Heart left ventricle (tissue), 16 donors: ENCODE measurements at regions of chr6 and their contacts with region 1.

Region 1: GRCh38 chr6:41463062-41463930 is 82.9 kb upstream of the FOXP4 start:
- DNase-seq: peak; percentile 66 to 85 (median 73)
- ATAC-seq: peak; percentile 83 to 95 (median 89)
- H3K4me3 ChIP-seq: no peak overlapping the region
- H3K27ac ChIP-seq: no peak overlapping the region
- H3K4me1 ChIP-seq: peaks cover 0 to 5% (median 0%) of the 10 kb centered on the region in 12 donors
- H3K27me3 ChIP-seq: peaks cover 0 to 14% (median 3%) of the 10 kb centered on the region in 9 donors
- CTCF ChIP-seq: peak; percentile 54 to 78 (median 69)
- POLR2A ChIP-seq: no peak

Region 2: DNA sequence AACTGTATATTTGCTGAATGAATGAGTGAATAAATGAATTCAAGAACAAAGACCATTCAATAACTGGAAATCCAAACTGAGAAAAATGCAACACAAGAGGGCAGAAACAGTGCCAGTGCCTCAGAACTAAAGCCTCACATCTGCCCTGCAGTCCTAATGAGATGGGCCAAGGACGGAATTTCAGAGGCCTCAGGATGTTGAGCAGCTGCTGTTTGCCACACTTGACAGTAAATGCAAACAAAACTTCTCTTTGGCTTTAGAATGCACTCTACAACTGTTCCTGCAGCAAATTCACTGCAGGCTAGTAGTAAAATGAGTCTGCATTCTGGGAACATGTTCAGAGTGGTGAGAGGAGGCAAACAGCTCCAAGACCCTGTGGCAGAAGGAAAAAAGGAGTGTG is 698.6 kb before region 1 on chr6:
- intact Hi-C with region 1: no loop called
- DNase-seq: no peak
- ATAC-seq: no peak
- H3K4me3 ChIP-seq: no peak overlapping the region
- H3K27ac ChIP-seq: no peak overlapping the region
- H3K4me1 ChIP-seq: peaks cover 0 to 10% (median 0%) of the 10 kb centered on the region in 12 donors
- H3K27me3 ChIP-seq: no peaks in the 10 kb centered on the region
- CTCF ChIP-seq: no peak
- POLR2A ChIP-seq: no peak

Region 3: GRCh38 chr6:41367700-41368099 is 95.6 kb before region 1 on chr6:
- intact Hi-C with region 1: loop called in 6 of 10 experiments (anchors 1 to 10 kb)
- DNase-seq: peak in 4 of 5 donors; percentile 45 to 50 (median 48)
- ATAC-seq: peak; percentile 40 to 78 (median 76)
- H3K4me3 ChIP-seq: no peak overlapping the region
- H3K27ac ChIP-seq: no peak overlapping the region
- H3K4me1 ChIP-seq: peaks cover 0 to 23% (median 14%) of the 10 kb centered on the region in 12 donors
- H3K27me3 ChIP-seq: peaks cover 6 to 64% (median 29%) of the 10 kb centered on the region in 9 donors
- CTCF ChIP-seq: peak; percentile 23 to 74 (median 60)
- POLR2A ChIP-seq: no peak

Region 4: GRCh38 chr6:41545703-41546474 is 82.6 kb after region 1 on chr6 and contains the start of gene FOXP4:
- intact Hi-C with region 1: loop called in 1 of 10 experiments (anchors 5 kb)
- DNase-seq: peak; percentile 90 to 93 (median 93)
- ATAC-seq: peak; percentile 88 to 94 (median 93)
- H3K4me3 ChIP-seq: peak within 1 kb of the TSS; percentile 51 to 97 (median 80)
- H3K27ac ChIP-seq: peak within 1 kb of the TSS; percentile 25 to 89 (median 79)
- H3K4me1 ChIP-seq: peaks cover 4 to 48% (median 20%) of the 10 kb centered on the region in 12 donors
- H3K27me3 ChIP-seq: peaks cover 0 to 20% (median 0%) of the 10 kb centered on the region in 9 donors
- CTCF ChIP-seq: no peak
- POLR2A ChIP-seq: no peak
- total RNA-seq, gene FOXP4: 11.3 to 22.5 (median 16.0) TPM

Region 5: GRCh38 chr6:41581381-41581991 is 118.2 kb after region 1 on chr6:
- intact Hi-C with region 1: loop called in 1 of 10 experiments (anchors 2 kb)
- DNase-seq: peak in 4 of 5 donors; percentile 35 to 80 (median 76)
- ATAC-seq: peak; percentile 6 to 78 (median 61)
- H3K4me3 ChIP-seq: no peak overlapping the region
- H3K27ac ChIP-seq: peak overlapping the region in 4 of 12 donors; percentile 17 to 47 (median 32)
- H3K4me1 ChIP-seq: peaks cover 0 to 67% (median 19%) of the 10 kb centered on the region in 12 donors
- H3K27me3 ChIP-seq: no peaks in the 10 kb centered on the region
- CTCF ChIP-seq: no peak
- POLR2A ChIP-seq: no peak

Region 6: GRCh38 chr6:41591859-41592502 is 128.7 kb after region 1 on chr6:
- intact Hi-C with region 1: loop called (anchors 1 to 5 kb)
- DNase-seq: peak in 4 of 5 donors; percentile 58 to 71 (median 64)
- ATAC-seq: peak; percentile 54 to 71 (median 60)
- H3K4me3 ChIP-seq: no peak overlapping the region
- H3K27ac ChIP-seq: no peak overlapping the region
- H3K4me1 ChIP-seq: no peaks in the 10 kb centered on the region
- H3K27me3 ChIP-seq: no peaks in the 10 kb centered on the region
- CTCF ChIP-seq: peak; percentile 80 to 96 (median 91)
- POLR2A ChIP-seq: peak in 1 of 2 donors; percentile 14

Region 7: GRCh38 chr6:41675176-41675770 is 212.0 kb after region 1 on chr6:
- intact Hi-C with region 1: loop called in 8 of 10 experiments (anchors 5 to 10 kb)
- DNase-seq: no peak
- ATAC-seq: no peak
- H3K4me3 ChIP-seq: no peak overlapping the region
- H3K27ac ChIP-seq: no peak overlapping the region
- H3K4me1 ChIP-seq: no peaks in the 10 kb centered on the region
- H3K27me3 ChIP-seq: no peaks in the 10 kb centered on the region
- CTCF ChIP-seq: no peak
- POLR2A ChIP-seq: no peak

Region 8: DNA sequence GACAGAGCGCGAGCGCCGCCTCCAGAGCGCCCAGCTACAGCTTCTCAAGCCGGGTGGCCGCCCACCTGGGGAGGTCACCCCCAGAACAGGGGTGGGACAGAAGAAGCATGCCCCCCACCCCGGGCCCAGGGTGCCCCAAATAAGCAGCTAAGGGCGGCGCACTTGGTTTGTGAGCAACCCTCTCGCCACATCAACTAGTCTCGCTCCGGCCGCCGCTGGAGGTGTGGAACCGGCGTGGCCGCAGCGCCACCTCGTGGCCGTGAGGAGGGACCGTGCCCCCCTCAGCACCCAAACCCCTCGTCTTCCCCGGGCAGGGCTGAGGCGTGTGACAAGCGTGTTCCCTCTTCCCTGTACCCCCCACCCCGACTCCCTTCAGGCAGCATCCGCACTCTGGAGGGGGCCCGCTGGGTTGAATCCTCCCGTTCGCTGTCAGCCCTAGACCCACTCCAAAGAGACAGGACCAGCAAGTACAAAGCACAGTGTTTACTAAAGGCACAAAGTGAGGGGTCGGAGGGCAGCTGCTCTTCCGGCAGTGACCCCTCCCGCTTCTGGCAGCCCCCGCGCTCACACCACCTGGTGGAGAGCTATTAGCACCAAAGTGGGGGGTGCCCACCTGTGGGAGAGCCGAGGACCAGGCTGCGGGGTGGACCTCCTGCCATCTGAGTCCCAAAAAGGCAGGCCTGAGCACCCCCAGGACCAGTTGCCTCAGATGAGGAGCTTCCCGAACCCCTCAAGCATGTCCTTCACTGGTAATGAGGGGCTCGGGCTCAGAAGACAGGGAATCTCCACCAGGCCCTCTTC is 220.4 kb after region 1 on chr6:
- intact Hi-C with region 1: loop called in 9 of 10 experiments (anchors 2 to 10 kb)
- DNase-seq: peak; percentile 80 to 91 (median 84)
- ATAC-seq: peak; percentile 59 to 82 (median 78)
- H3K4me3 ChIP-seq: peak overlapping the region; percentile 5 to 66 (median 55)
- H3K27ac ChIP-seq: peak overlapping the region; percentile 66 to 91 (median 82)
- H3K4me1 ChIP-seq: peaks cover 0 to 35% (median 20%) of the 10 kb centered on the region in 12 donors
- H3K27me3 ChIP-seq: no peaks in the 10 kb centered on the region
- CTCF ChIP-seq: peak; percentile 86 to 97 (median 93)
- POLR2A ChIP-seq: no peak